CD8-positive, alpha-beta memory T cell (primary cell): ENCODE measurements at regions of chr3 and their contacts with region 1.

Region 1: GRCh38 chr3:14203521-14204079 is 25.0 kb downstream of the LSM3 start:
- DNase-seq: peak in 4 of 5 donors; percentile 10 to 62 (median 24)
- H3K4me3 ChIP-seq: no peak overlapping the region
- H3K4me3 Mint-ChIP-seq: no peak overlapping the region
- H3K27ac ChIP-seq: no peak overlapping the region
- H3K27ac Mint-ChIP-seq: peak overlapping the region in 2 of 8 donors; percentile 42 to 49
- H3K4me1 ChIP-seq: no peaks in the 10 kb centered on the region
- H3K4me1 Mint-ChIP-seq: peaks cover 5 to 6% (median 5%) of the 10 kb centered on the region in 3 donors
- H3K27me3 ChIP-seq: no peaks in the 10 kb centered on the region
- H3K27me3 Mint-ChIP-seq: no peaks in the 10 kb centered on the region

Region 2: GRCh38 chr3:14188041-14188754 is 15.4 kb before region 1 on chr3:
- CTCF ChIA-PET with region 1: interaction called, 10 read pairs
- POLR2A ChIA-PET with region 1: no interaction called
- DNase-seq: no peak
- H3K4me3 ChIP-seq: no peak overlapping the region
- H3K4me3 Mint-ChIP-seq: peak overlapping the region in 1 of 7 donors; percentile 65
- H3K27ac ChIP-seq: no peak overlapping the region
- H3K27ac Mint-ChIP-seq: peak overlapping the region in 2 of 8 donors; percentile 12 to 20
- H3K4me1 ChIP-seq: no peaks in the 10 kb centered on the region
- H3K4me1 Mint-ChIP-seq: peaks cover 55 to 78% (median 69%) of the 10 kb centered on the region in 3 donors
- H3K27me3 ChIP-seq: no peaks in the 10 kb centered on the region
- H3K27me3 Mint-ChIP-seq: no peaks in the 10 kb centered on the region

Region 3: DNA sequence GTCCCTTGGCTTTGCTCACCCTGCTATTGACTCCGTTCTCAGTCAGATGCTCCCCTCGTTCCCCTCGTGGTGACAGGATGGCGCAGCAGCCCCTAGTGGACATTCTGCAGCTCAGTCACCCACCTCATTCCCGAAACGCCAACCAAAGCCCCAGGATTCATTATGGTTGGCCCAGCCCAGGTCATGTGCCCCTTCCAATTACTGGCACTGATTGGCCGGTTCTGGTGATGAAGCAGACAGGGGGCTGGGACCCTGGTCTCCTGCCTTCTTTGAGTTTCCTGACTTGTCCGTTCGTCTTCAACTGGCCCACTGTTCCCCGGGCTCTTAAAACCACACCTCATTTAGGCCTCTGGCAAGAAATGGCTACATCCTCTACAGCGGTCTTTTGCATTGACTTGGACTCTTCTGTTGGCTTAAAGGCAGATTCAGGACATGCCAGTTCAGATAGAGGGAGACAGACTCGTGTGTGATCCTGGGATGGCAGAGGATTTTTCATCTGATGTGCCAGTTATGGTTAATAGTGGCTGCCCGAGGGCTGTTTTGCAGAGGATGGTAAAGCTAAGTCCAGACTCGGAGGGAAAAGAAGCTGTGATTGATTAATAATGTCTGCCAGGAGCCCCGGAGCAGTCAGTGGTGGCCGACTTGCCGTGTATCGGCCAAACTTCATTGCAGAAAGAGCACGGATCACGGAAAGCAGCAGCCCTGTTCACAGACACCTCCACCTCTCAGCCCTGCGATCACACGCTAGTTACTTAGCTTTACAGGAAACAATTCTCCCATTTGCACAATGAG is 12.9 kb after region 1 on chr3:
- CTCF ChIA-PET with region 1: interaction called, 18 read pairs
- POLR2A ChIA-PET with region 1: no interaction called
- DNase-seq: peak in 4 of 5 donors; percentile 29 to 61 (median 57)
- H3K4me3 ChIP-seq: peak overlapping the region; percentile 62
- H3K4me3 Mint-ChIP-seq: peak overlapping the region in 5 of 7 donors; percentile 6 to 87 (median 67)
- H3K27ac ChIP-seq: peak overlapping the region; percentile 29
- H3K27ac Mint-ChIP-seq: peak overlapping the region in 5 of 8 donors; percentile 12 to 96 (median 74)
- H3K4me1 ChIP-seq: no peaks in the 10 kb centered on the region
- H3K4me1 Mint-ChIP-seq: no peaks in the 10 kb centered on the region
- H3K27me3 ChIP-seq: no peaks in the 10 kb centered on the region
- H3K27me3 Mint-ChIP-seq: peaks cover 7 to 10% of the 10 kb centered on the region in 2 donors